ENCODE measurements at regions of chr17 and their contacts with region 1.

Region 1: GRCh38 chr17:30196504-30196903 is 39.0 kb downstream of the SLC6A4 start:
- DNase-seq: no peak
- ATAC-seq: no peak
- H3K4me3 ChIP-seq: no peak overlapping the region
- H3K27ac ChIP-seq: no peak overlapping the region
- H3K4me1 ChIP-seq: no peaks in the 10 kb centered on the region
- H3K27me3 ChIP-seq: peaks cover 2% of the 10 kb centered on the region; the same call in 1 of the 2 replicates
- CTCF ChIP-seq: no peak

Region 2: DNA sequence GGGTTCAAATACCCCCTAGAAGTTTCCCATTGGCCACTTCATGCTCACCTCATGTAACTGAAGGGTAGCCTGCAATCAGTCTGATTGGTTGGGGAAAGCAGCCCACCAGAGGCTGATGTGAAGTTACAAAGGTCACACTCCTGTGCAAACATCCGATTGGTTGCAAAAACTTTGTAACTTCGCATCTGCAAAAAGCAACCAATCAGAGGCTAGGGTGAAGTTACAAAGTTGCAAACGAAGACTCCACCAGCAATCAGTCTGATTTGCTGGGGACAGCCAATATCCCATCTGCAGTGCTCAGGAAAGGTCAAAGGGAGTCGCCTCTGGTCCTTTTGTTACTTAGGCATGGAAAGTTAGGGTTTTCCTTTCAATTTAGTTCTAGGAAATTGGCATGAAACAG is 766.2 kb before region 1 on chr17:
- CTCF ChIA-PET with region 1: interaction called, 11 read pairs
- POLR2A ChIA-PET with region 1: no interaction called
- in situ Hi-C with region 1: no loop called
- intact Hi-C with region 1: no loop called
- DNase-seq: no peak
- ATAC-seq: no peak
- H3K4me3 ChIP-seq: no peak overlapping the region
- H3K27ac ChIP-seq: no peak overlapping the region
- H3K4me1 ChIP-seq: no peaks in the 10 kb centered on the region
- H3K27me3 ChIP-seq: no peaks in the 10 kb centered on the region
- CTCF ChIP-seq: no peak

Region 3: GRCh38 chr17:30116661-30117551 is 79.6 kb before region 1 on chr17 and contains the start of gene NSRP1:
- CTCF ChIA-PET with region 1: no interaction called
- POLR2A ChIA-PET with region 1: interaction called, 12 read pairs
- in situ Hi-C with region 1: no loop called
- intact Hi-C with region 1: no loop called
- DNase-seq: peak; percentile 84
- ATAC-seq: peak; percentile 98
- H3K4me3 ChIP-seq: peak within 1 kb of the TSS; percentile 79 to 99
- H3K27ac ChIP-seq: peak within 1 kb of the TSS; percentile 99
- H3K4me1 ChIP-seq: peaks cover 24% of the 10 kb centered on the region
- H3K27me3 ChIP-seq: no peaks in the 10 kb centered on the region
- CTCF ChIP-seq: no peak
- total RNA-seq, gene NSRP1: 30.5 TPM

Measured in Panc1 (cell line).